PC-3 (cell line): ENCODE measurements at regions of chr2 and their contacts with region 1.

Region 1: GRCh38 chr2:166180951-166181812 is 53.4 kb upstream of the SCN1A start:
- DNase-seq: peak; percentile 93
- ATAC-seq: peak; percentile 75
- H3K4me3 ChIP-seq: no peak overlapping the region
- H3K27ac ChIP-seq: no peak overlapping the region
- H3K4me1 ChIP-seq: peaks cover 20% of the 10 kb centered on the region
- H3K27me3 ChIP-seq: peaks cover 4% of the 10 kb centered on the region; the same call in 1 of the 2 replicates
- CTCF ChIP-seq: peak; percentile 88

Region 2: GRCh38 chr2:166057370-166058164 is 123.6 kb before region 1 on chr2:
- CTCF ChIA-PET with region 1: no interaction called
- POLR2A ChIA-PET with region 1: no interaction called
- intact Hi-C with region 1: loop called (anchors 1 kb)
- DNase-seq: peak; percentile 68
- ATAC-seq: no peak
- H3K4me3 ChIP-seq: no peak overlapping the region
- H3K27ac ChIP-seq: no peak overlapping the region
- H3K4me1 ChIP-seq: peaks cover 5% of the 10 kb centered on the region
- H3K27me3 ChIP-seq: peaks cover 39% of the 10 kb centered on the region
- CTCF ChIP-seq: peak; percentile 94

Region 3: DNA sequence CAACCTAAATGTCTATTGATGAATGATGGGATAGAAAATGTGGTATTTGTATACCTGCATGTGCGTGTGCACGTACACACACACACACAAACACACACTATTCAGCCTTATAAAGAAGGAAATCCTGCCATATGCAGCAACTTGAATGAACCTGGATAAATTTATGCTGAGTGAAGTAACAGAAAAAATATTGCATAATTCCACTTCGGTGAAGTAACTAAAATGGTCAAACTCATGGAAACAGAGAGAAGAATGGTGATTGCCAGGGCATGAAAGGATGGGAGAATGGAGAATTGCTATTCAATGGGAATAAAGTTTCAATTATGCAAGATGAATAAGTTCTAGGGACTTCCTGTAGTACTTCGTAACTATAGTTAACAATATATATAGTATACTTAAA is 42.1 kb after region 1 on chr2:
- CTCF ChIA-PET with region 1: no interaction called
- POLR2A ChIA-PET with region 1: no interaction called
- intact Hi-C with region 1: no loop called
- DNase-seq: no peak
- ATAC-seq: no peak
- H3K4me3 ChIP-seq: no peak overlapping the region
- H3K27ac ChIP-seq: no peak overlapping the region
- H3K4me1 ChIP-seq: no peaks in the 10 kb centered on the region
- H3K27me3 ChIP-seq: no peaks in the 10 kb centered on the region
- CTCF ChIP-seq: no peak

Region 4: DNA sequence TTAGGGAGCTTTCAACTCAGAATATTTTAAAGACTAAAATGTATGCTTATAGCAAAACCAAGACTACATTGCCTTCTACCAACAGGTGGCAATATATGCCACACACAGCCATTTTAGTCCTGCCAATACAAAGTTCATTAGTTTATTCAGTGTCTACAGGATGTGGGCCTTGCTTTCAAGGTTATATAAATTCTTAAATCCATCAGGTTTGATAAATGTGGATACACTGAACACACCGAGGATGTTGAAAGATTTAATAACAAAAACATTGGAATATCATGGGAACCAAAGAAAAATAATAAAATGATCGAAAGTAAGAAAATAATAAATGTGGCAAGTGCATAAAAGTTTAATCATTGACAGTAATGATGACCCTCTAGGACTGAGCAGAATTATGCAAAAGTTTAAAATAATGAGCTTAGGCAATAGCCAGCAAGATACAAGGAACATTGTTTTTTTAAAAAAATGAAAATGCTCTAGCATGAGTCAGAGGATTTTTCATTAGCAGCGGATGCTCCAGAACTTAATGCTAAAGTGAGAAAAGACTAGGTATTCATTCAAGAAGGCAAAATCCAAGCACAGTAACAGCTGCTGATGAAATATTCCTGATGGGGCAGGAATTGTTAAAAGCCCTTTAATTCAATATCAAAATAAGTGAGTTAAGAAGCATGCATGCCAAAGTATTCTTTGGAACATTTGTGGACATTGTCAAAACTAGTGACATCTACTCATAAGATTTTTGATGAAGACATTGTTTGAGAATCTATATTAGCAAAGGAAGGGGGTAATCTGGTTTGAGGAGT is 180.4 kb after region 1 on chr2:
- CTCF ChIA-PET with region 1: no interaction called
- POLR2A ChIA-PET with region 1: no interaction called
- intact Hi-C with region 1: no loop called
- DNase-seq: peak; percentile 73
- ATAC-seq: peak; percentile 93
- H3K4me3 ChIP-seq: no peak overlapping the region
- H3K27ac ChIP-seq: no peak overlapping the region
- H3K4me1 ChIP-seq: peaks cover 12% of the 10 kb centered on the region
- H3K27me3 ChIP-seq: no peaks in the 10 kb centered on the region
- CTCF ChIP-seq: peak; percentile 95

Region 5: DNA sequence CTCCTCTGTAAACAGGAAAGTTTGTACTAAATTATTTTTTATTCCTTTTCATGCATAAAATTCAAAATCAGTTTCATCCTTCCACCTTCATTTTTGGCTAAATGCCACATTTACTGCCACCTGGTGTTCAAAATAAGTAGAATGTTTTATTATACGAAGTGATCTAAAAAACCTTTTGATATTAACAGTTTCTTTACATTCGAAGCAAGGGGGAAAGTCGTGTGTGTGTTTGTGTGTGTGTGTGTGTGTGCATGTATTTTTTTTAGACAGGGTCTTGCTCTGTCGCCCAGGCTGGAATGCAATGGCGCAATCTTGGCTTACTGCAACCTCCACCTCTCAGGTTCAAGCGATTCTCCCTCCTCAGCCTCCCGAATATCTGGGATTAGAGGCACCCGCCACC is 203.6 kb after region 1 on chr2:
- CTCF ChIA-PET with region 1: no interaction called
- POLR2A ChIA-PET with region 1: no interaction called
- intact Hi-C with region 1: loop called (anchors 1 kb)
- DNase-seq: peak; percentile 85
- ATAC-seq: peak; percentile 27; the same call in 1 of the 2 replicates
- H3K4me3 ChIP-seq: no peak overlapping the region
- H3K27ac ChIP-seq: no peak overlapping the region
- H3K4me1 ChIP-seq: no peaks in the 10 kb centered on the region
- H3K27me3 ChIP-seq: no peaks in the 10 kb centered on the region
- CTCF ChIP-seq: peak; percentile 85

Region 6: GRCh38 chr2:166516712-166517303 is 335.6 kb after region 1 on chr2:
- CTCF ChIA-PET with region 1: no interaction called
- POLR2A ChIA-PET with region 1: no interaction called
- intact Hi-C with region 1: loop called (anchors 1 kb)
- DNase-seq: peak; percentile 65
- ATAC-seq: peak; percentile 78
- H3K4me3 ChIP-seq: no peak overlapping the region
- H3K27ac ChIP-seq: no peak overlapping the region
- H3K4me1 ChIP-seq: no peaks in the 10 kb centered on the region
- H3K27me3 ChIP-seq: peaks cover 61% of the 10 kb centered on the region
- CTCF ChIP-seq: peak; percentile 89